Right cardiac atrium (tissue), 5 donors: ENCODE measurements at regions of chr2 and their contacts with region 1.

Region 1: GRCh38 chr2:200306196-200306930 is at the start of gene SPATS2L:
- DNase-seq: peak; percentile 85 to 95 (median 93)
- ATAC-seq: peak; percentile 90 to 91
- H3K4me3 ChIP-seq: peak within 1 kb of the TSS; percentile 99
- H3K27ac ChIP-seq: peak within 1 kb of the TSS; percentile 69
- H3K4me1 ChIP-seq: peaks cover 3% of the 10 kb centered on the region
- H3K27me3 ChIP-seq: no peaks in the 10 kb centered on the region
- total RNA-seq, gene SPATS2L: 115 to 147 (median 124) TPM

Region 2: GRCh38 chr2:199985625-199986207 is 320.6 kb before region 1 on chr2:
- intact Hi-C with region 1: loop called in 2 of 4 experiments (anchors 10 kb)
- DNase-seq: peak in 2 of 3 donors; percentile 43 to 73
- ATAC-seq: peak; percentile 47 to 58
- H3K4me3 ChIP-seq: no peak overlapping the region
- H3K27ac ChIP-seq: no peak overlapping the region
- H3K4me1 ChIP-seq: peaks cover 3% of the 10 kb centered on the region
- H3K27me3 ChIP-seq: no peaks in the 10 kb centered on the region

Region 3: GRCh38 chr2:200156166-200156835 is 150.1 kb before region 1 on chr2:
- intact Hi-C with region 1: no loop called
- DNase-seq: peak in 2 of 3 donors; percentile 52 to 56
- ATAC-seq: peak; percentile 83 to 93
- H3K4me3 ChIP-seq: peak overlapping the region; percentile 49
- H3K27ac ChIP-seq: no peak overlapping the region
- H3K4me1 ChIP-seq: no peaks in the 10 kb centered on the region
- H3K27me3 ChIP-seq: no peaks in the 10 kb centered on the region

Region 4: GRCh38 chr2:200352636-200353035 is 46.3 kb after region 1 on chr2:
- intact Hi-C with region 1: loop called in 1 of 4 experiments (anchors 5 kb)
- DNase-seq: no peak
- ATAC-seq: peak in 1 of 2 donors; percentile 39
- H3K4me3 ChIP-seq: no peak overlapping the region
- H3K27ac ChIP-seq: peak overlapping the region; percentile 47
- H3K4me1 ChIP-seq: peaks cover 10% of the 10 kb centered on the region
- H3K27me3 ChIP-seq: no peaks in the 10 kb centered on the region

Region 5: GRCh38 chr2:200471324-200471848 is 165.0 kb after region 1 on chr2:
- intact Hi-C with region 1: loop called in 3 of 4 experiments (anchors 10 kb)
- DNase-seq: no peak
- ATAC-seq: peak in 1 of 2 donors; percentile 25
- H3K4me3 ChIP-seq: no peak overlapping the region
- H3K27ac ChIP-seq: no peak overlapping the region
- H3K4me1 ChIP-seq: no peaks in the 10 kb centered on the region
- H3K27me3 ChIP-seq: no peaks in the 10 kb centered on the region